Activated naive CD4-positive, alpha-beta T cell treated with anti-CD3 and anti-CD28 coated beads for 36 hours (primary cell): ENCODE measurements at regions of chr14 and their contacts with region 1.

Region 1: DNA sequence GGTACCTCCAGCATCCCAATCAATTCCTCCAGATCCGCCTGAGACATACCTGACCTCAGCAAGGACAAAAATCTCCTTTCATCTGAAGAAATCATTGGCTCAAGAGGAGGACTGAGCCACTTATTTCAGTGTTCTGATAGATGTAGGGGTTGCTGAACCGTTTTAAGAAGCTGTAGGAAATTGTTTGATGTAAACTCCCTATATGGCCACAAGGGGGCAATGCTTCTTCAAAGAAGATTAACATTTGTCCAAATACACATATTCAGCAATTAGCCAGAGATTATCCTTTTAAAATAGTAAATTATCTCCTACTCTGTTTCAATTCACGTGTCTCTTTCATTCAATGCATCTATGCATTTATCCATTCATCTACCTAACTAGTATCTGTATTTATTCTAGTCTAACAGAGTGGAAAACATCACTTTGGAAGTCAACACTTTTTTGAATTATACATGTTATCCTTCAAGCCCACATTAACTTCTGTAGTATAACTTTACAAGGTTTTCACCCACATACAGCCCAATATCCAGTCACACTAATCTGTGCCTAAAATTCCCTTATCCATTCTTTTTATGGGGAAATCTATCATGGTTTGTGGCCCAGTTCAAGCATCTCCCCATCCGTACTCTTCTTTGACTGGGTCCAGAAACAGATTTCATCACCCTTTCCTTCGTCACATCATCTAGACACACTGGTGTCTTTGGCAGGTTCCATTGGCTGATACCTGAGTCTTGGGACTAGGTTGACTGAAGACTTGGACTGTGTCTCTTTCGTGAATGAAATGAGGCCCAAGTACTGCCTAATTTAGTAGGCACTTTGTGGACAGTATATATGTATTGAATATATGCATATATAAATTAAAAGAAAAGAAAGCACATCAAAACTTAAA is 411.0 kb upstream of the OR4E1 start:
- DNase-seq: peak; percentile 31
- H3K4me3 Mint-ChIP-seq: peak overlapping the region; percentile 46
- H3K27ac Mint-ChIP-seq: peak overlapping the region; percentile 84
- H3K4me1 Mint-ChIP-seq: peaks cover 25% of the 10 kb centered on the region
- H3K27me3 Mint-ChIP-seq: no peaks in the 10 kb centered on the region

Region 2: DNA sequence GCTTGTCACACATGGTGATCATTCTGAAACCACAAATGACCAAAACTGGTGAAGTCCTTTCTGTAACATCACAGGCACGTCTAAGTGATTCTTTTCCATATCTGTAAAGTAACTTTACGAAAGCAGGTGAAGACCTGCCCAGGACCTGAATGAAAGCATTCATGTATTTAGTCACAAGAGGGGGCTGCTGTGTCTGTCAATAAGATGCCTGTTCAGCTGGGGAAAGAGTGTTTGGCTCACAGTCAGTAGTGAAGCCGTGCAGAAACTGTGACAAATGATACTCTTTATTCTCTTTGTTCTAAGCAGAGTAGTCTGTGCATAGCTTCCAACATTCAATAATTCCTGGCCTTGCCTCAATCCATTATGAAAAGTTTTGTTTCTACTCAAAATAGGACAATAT is 37.5 kb before region 1 on chr14:
- CTCF ChIA-PET with region 1: interaction called, 3 read pairs
- intact Hi-C with region 1: loop called (anchors 1 kb)
- DNase-seq: peak; percentile 56
- H3K4me3 Mint-ChIP-seq: peak overlapping the region; percentile 34
- H3K27ac Mint-ChIP-seq: peak overlapping the region; percentile 86
- H3K4me1 Mint-ChIP-seq: peaks cover 43% of the 10 kb centered on the region
- H3K27me3 Mint-ChIP-seq: no peaks in the 10 kb centered on the region

Region 3: DNA sequence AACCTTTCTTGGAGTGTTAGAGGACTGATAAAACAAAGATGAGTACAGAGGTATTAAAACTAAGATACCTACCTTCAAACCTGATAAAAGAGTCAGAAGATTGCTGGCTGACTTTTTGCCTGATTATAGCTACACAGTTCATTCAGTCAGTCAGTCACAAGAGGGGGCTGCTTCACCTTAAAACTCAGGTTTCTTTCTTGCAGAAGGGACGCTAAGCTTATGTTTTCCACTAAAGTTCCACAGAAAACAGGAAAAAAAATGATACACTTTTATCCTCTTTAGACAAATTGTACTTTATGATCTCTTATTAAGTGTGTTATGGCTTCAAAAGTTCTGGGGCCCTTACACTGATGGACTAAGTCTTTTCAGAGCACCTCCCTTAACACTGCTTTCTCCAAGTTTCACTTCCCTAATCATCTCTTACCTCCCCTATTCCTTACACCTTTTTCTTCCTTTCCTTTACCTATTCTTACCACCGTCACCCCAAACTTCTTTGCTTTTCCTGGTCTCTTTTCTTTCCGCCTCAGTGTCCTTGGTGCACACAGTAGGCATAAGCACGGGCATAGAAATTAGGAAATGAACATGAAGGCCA is 37.7 kb after region 1 on chr14:
- CTCF ChIA-PET with region 1: no interaction called
- intact Hi-C with region 1: no loop called
- DNase-seq: peak; percentile 39
- H3K4me3 Mint-ChIP-seq: peak overlapping the region; percentile 79
- H3K27ac Mint-ChIP-seq: peak overlapping the region; percentile 93
- H3K4me1 Mint-ChIP-seq: peaks cover 20% of the 10 kb centered on the region
- H3K27me3 Mint-ChIP-seq: no peaks in the 10 kb centered on the region